Posterior vena cava (tissue), 2 donors: ENCODE measurements at regions of chr10 and their contacts with region 1.

Region 1: GRCh38 chr10:93288654-93289634 is 193.2 kb downstream of the MYOF start:
- DNase-seq: peak; percentile 88

Region 2: GRCh38 chr10:93080350-93081046 is 208.4 kb before region 1 on chr10:
- intact Hi-C with region 1: loop called in 1 of 2 experiments (anchors 10 kb)
- DNase-seq: peak; percentile 86

Region 3: GRCh38 chr10:93115661-93116383 is 173.1 kb before region 1 on chr10:
- intact Hi-C with region 1: loop called in 1 of 2 experiments (anchors 10 kb)
- DNase-seq: peak; percentile 88

Region 4: GRCh38 chr10:93535293-93535692 is 246.3 kb after region 1 on chr10:
- intact Hi-C with region 1: no loop called
- DNase-seq: no peak